Posterior cingulate gyrus (tissue), 11 donors: ENCODE measurements at regions of chr2 and their contacts with region 1.

Region 1: DNA sequence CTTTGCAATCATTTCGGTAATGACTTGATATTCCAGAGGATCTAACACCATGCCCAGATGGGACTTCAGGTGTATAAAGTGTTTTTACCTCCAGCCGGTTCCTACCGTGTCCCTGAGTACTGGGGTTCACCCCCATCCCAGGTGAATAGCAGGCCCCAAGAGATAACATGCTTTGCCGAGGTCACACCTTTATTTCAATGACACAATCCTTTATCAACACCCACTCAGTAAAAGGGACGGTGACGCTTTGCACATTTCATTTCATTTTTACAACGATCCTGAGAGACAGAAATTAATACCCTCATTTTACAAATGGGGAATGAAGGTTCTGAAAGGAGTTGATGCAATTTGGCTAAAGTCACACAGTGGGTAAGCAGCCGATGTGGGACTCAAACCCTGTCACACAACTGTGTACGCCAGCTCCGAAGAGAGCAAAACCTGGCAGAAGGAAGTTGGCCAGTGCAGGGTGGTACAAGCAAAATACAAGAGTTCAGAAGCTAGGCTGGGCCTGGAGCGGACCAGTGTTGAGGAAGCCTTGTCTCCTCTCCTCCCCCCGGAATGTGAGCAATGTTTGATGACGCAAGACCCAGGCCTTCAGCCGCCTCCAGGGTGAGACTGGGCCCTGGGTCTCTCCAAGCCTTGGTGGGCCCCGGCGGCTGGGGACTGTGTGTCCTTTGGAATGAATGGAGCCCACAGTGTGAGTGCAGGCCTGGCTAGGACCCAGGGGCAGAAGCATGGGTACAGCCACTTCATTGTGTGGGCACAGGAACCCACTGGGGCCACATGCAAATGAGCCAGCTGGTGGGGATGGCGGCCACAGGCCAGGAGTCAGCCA is 139.6 kb upstream of the MYCN start:
- DNase-seq: peak; percentile 74 to 99 (median 90)

Region 2: DNA sequence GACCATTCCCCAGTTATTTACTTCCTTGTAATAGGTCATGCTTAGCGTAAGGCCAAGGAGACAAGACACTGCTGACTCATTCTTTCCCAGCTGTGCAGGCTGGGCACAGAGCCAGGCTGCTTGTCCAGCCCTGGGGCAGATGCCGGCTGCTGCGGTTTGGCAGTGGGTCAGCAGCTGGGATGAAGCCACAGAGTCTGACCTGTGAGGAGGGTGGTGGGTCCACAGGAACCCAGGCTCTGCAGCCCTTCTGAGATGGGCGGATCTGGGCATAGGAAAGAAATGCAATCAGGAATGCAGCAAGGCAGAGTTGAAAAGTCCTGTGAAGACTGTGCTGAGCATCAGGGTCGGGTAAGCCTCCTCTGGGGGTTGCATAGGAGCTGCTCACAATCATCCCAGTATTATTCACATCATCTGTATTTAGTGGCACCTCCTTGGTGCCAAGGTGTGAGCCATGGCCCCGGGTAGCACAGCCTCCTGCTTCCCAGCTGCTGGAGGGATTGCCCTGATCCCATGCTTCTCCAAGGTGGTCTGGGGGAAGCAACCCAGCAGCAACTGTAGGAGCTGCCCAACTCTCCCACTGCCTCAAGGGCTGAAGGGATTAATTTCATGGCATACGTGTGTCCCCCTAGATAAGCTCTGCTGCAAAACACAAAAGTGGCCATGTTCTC is 70.0 kb before region 1 on chr2:
- intact Hi-C with region 1: loop called (anchors 5 kb)
- DNase-seq: peak; percentile 69 to 98 (median 90)